PC-3 (cell line): ENCODE measurements at regions of chr3 and their contacts with region 1.

Region 1: DNA sequence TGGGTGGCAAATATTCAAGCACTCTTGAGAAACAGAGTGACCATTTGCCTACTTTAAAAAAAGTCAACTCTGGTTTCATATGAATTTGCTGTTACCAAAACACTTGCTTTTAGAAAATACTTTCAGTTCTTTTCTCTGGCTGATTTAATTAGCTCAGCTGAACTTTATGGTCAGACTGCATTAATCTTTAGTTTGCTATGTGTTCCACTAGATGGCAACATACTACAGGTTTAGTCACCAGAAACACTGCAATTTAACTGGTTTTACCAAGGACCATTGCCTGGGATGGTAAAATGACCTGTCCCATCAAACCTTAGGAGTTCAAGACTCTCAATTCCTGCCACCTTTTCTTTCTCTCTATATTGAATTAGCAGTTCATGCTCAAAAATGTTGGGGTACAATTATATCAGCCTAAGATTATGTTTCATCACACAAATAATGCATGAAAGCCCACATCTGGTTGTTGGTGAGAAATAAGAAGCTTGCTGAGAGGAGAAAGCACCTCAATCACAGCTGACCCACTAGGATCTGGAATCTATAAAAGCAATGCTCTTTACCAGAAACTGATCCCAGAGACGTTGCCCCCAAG is 14.2 kb downstream of the EIF4E3 start:
- DNase-seq: peak; percentile 77
- ATAC-seq: peak; percentile 96
- H3K4me3 ChIP-seq: no peak overlapping the region
- H3K27ac ChIP-seq: no peak overlapping the region
- H3K4me1 ChIP-seq: no peaks in the 10 kb centered on the region
- H3K27me3 ChIP-seq: no peaks in the 10 kb centered on the region
- CTCF ChIP-seq: peak; percentile 86

Region 2: DNA sequence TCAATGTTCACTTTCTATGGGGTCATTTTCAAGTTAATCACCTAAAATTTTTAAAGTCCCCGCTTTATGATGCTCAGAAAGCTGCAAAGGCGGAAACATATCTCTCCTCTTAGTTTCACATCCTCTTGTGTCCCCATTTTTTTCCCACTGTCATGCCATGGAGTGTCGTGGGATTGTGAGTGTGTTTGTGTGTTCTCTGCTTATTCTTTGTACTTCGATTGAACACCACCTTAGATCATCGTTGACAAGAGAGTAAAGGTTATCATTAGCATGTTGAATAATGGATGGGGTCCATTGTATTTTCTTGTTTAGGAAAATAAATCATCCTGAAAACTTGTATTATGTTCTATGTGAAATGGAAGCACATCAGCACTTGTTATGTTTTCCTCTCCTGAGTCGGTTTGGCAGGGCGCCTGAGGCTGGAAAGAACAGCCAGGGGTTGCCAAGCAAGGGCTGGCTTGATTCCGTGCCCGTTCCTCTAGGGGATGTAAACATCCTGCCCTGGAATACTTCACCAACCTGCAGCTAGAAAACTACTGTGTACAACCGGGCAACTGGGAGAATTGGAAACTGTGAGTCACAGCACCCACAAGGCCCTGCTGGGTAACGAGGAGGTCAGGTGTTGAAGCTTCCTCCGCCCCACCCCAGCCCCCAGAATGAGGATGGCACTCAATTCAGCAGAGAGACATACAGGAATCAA is 53.0 kb before region 1 on chr3:
- CTCF ChIA-PET with region 1: no interaction called
- POLR2A ChIA-PET with region 1: no interaction called
- intact Hi-C with region 1: no loop called
- DNase-seq: peak; percentile 97
- ATAC-seq: peak; percentile 99
- H3K4me3 ChIP-seq: peak overlapping the region; percentile 39; the same call in 1 of the 2 replicates
- H3K27ac ChIP-seq: peak overlapping the region; percentile 25
- H3K4me1 ChIP-seq: peaks cover 12% of the 10 kb centered on the region
- H3K27me3 ChIP-seq: no peaks in the 10 kb centered on the region
- CTCF ChIP-seq: no peak

Region 3: GRCh38 chr3:73086071-73086494 is 1375.1 kb after region 1 on chr3:
- CTCF ChIA-PET with region 1: no interaction called
- POLR2A ChIA-PET with region 1: no interaction called
- intact Hi-C with region 1: loop called (anchors 5 kb)
- DNase-seq: peak; percentile 68
- ATAC-seq: peak; percentile 79
- H3K4me3 ChIP-seq: no peak overlapping the region
- H3K27ac ChIP-seq: no peak overlapping the region
- H3K4me1 ChIP-seq: no peaks in the 10 kb centered on the region
- H3K27me3 ChIP-seq: no peaks in the 10 kb centered on the region
- CTCF ChIP-seq: peak; percentile 93